ENCODE measurements at regions of chr1 and their contacts with region 1.

Region 1: DNA sequence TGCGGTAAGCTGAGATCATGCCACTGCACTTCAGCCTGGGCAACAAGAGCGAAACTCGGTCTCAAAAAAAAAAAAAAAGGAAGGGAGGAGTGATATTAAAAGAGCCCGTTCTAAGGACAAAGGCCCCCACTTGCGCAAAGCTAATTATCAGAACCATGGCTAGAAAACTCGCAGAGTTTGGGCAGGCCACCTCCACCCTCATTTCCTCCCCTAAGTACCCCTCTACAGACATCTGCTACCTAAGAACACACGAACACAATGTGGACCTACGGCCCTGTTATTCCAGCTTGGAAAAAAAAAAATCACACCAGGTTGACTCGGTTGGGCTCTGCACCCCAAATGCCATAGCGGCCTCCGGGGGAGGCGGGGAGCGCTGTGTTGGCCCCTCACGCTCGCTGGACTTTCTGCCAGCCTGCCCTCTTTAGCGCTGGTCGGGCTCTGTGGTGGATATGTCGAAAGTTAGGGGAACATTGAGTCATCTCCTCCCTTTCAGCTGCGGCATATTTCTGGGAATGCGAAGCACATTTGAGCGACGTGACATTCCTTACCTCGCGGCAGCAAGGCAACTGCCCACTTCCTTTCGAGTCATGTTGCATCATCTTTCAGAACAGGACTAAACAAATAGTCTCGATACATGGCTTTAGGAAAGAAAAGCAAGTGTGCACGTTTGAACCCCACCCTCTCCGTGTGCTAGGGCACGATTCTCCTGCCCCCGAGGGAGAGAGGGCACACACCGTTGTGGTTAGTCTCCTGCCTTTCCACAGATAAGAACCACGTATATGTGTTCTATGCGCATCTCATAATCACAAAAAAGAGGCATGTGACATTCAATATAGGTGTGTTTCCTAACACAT is 106.1 kb upstream of the SLC45A1 start:
- DNase-seq: peak; percentile 97
- ATAC-seq: peak; percentile 94
- H3K4me3 ChIP-seq: no peak overlapping the region
- H3K27ac ChIP-seq: peak overlapping the region; percentile 87
- H3K4me1 ChIP-seq: peaks cover 81% of the 10 kb centered on the region
- H3K27me3 ChIP-seq: no peaks in the 10 kb centered on the region
- CTCF ChIP-seq: peak; percentile 36; the same call in 1 of the 2 replicates
- EP300 ChIP-seq: peak in 1 of 2 experiments; percentile 98; a peak in 3 of 4 replicates
- POLR2A ChIP-seq: peak; percentile 59 to 71
- RAD21 ChIP-seq: no peak

Region 2: GRCh38 chr1:8061210-8061609 is 150.6 kb before region 1 on chr1:
- CTCF ChIA-PET with region 1: no interaction called
- POLR2A ChIA-PET with region 1: no interaction called
- in situ Hi-C with region 1: no loop called
- intact Hi-C with region 1: no loop called
- DNase-seq: peak; percentile 77
- ATAC-seq: peak; percentile 32
- H3K4me3 ChIP-seq: no peak overlapping the region
- H3K27ac ChIP-seq: no peak overlapping the region
- H3K4me1 ChIP-seq: peaks cover 18% of the 10 kb centered on the region
- H3K27me3 ChIP-seq: no peaks in the 10 kb centered on the region
- CTCF ChIP-seq: no peak
- EP300 ChIP-seq: peak in 1 of 2 experiments; percentile 62; a peak in 2 of 4 replicates
- POLR2A ChIP-seq: no peak
- RAD21 ChIP-seq: no peak

Region 3: GRCh38 chr1:8176279-8176678 is 35.5 kb before region 1 on chr1:
- CTCF ChIA-PET with region 1: no interaction called
- POLR2A ChIA-PET with region 1: no interaction called
- in situ Hi-C with region 1: no loop called
- intact Hi-C with region 1: no loop called
- DNase-seq: no peak
- ATAC-seq: no peak
- H3K4me3 ChIP-seq: no peak overlapping the region
- H3K27ac ChIP-seq: no peak overlapping the region
- H3K4me1 ChIP-seq: peaks cover 28% of the 10 kb centered on the region
- H3K27me3 ChIP-seq: no peaks in the 10 kb centered on the region
- CTCF ChIP-seq: no peak
- EP300 ChIP-seq: no peak
- POLR2A ChIP-seq: no peak
- RAD21 ChIP-seq: no peak

Region 4: GRCh38 chr1:8197493-8198282 is 14.1 kb before region 1 on chr1:
- CTCF ChIA-PET with region 1: no interaction called
- POLR2A ChIA-PET with region 1: interaction called, 48 read pairs
- in situ Hi-C with region 1: no loop called
- intact Hi-C with region 1: no loop called
- DNase-seq: peak; percentile 83
- ATAC-seq: peak; percentile 35
- H3K4me3 ChIP-seq: no peak overlapping the region
- H3K27ac ChIP-seq: peak overlapping the region; percentile 61
- H3K4me1 ChIP-seq: peaks cover 91% of the 10 kb centered on the region
- H3K27me3 ChIP-seq: no peaks in the 10 kb centered on the region
- CTCF ChIP-seq: 0 out of 2 replicates have a peak, but pooled peaks have one; percentile 3
- EP300 ChIP-seq: peak; percentile 71 to 95; a peak in 3 of 4 replicates
- POLR2A ChIP-seq: no peak
- RAD21 ChIP-seq: no peak

Region 5: DNA sequence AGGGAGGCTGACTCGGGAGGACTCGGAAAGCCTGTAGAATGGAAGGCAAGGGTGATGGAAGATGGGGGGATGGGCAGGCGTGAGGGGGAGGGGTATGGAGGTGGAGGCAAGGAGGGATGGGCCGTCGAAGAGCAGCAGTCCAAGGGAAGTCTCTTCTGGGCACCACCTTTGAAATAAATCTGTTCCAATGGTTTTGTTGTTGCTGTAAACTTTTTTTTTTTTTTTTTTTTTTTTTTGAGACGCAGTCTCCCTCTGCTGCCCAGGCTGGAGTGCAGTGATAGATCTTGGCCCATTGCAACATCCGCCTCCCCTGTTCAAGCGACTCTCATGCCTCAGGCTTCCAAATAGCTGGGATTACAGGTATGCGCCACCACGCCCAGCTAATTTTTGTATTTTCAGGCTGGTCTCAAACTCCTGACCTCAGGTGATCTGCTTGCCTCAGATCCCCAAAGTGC is 27.1 kb after region 1 on chr1:
- CTCF ChIA-PET with region 1: no interaction called
- POLR2A ChIA-PET with region 1: interaction called, 10 read pairs
- in situ Hi-C with region 1: no loop called
- intact Hi-C with region 1: no loop called
- DNase-seq: peak; percentile 79
- ATAC-seq: peak; percentile 57
- H3K4me3 ChIP-seq: peak overlapping the region in 2 of 3 experiments; percentile 2 to 42; a peak in 3 of 6 replicates
- H3K27ac ChIP-seq: peak overlapping the region; percentile 84
- H3K4me1 ChIP-seq: peaks cover 58% of the 10 kb centered on the region
- H3K27me3 ChIP-seq: no peaks in the 10 kb centered on the region
- CTCF ChIP-seq: peak; percentile 53; the same call in 1 of the 2 replicates
- EP300 ChIP-seq: no peak; a peak in 1 of 4 replicates
- POLR2A ChIP-seq: no peak
- RAD21 ChIP-seq: no peak